MCF 10A (cell line): ENCODE measurements at regions of chr3 and their contacts with region 1.

Region 1: GRCh38 chr3:8769088-8769822 is at the start of gene OXTR:
- DNase-seq: peak; percentile 57
- H3K4me3 Mint-ChIP-seq: peak within 1 kb of the TSS; percentile 73
- H3K27ac Mint-ChIP-seq: no peak within 1 kb of the TSS
- H3K4me1 Mint-ChIP-seq: peaks cover 7% of the 10 kb centered on the region
- H3K27me3 Mint-ChIP-seq: peaks cover 14% of the 10 kb centered on the region
- CTCF ChIP-seq: peak; percentile 99
- total RNA-seq, gene OXTR: 0.63 and 1.2 TPM in 2 replicates

Region 2: GRCh38 chr3:8610951-8611350 is 158.3 kb before region 1 on chr3:
- CTCF ChIA-PET with region 1: no interaction called
- POLR2A ChIA-PET with region 1: no interaction called
- intact Hi-C with region 1: no loop called
- DNase-seq: no peak
- H3K4me3 Mint-ChIP-seq: no peak overlapping the region
- H3K27ac Mint-ChIP-seq: no peak overlapping the region
- H3K4me1 Mint-ChIP-seq: peaks cover 11% of the 10 kb centered on the region
- H3K27me3 Mint-ChIP-seq: no peaks in the 10 kb centered on the region
- CTCF ChIP-seq: no peak

Region 3: DNA sequence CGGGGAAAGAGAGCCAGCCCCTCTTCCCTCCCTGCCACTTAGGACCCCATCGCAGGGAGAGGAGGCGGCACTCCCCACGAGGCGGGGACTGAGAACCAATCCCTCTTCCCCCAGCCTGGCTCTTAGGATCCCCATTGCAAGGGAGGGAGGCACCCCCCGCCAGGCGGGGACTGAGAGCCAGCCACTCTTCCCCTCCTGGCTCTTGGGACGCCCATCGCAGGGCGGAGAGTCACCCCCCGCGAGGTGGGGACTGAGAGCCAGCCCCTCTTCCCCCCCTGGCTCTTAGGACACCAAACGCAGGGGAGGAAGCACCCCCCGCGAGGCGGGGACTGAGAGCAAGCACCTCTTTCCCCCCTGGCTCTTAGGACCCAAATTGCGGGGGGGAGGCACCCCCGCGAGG is 90.5 kb before region 1 on chr3:
- CTCF ChIA-PET with region 1: interaction called, 3 read pairs
- POLR2A ChIA-PET with region 1: no interaction called
- intact Hi-C with region 1: loop called (anchors 1 kb)
- DNase-seq: no peak
- H3K4me3 Mint-ChIP-seq: no peak overlapping the region
- H3K27ac Mint-ChIP-seq: no peak overlapping the region
- H3K4me1 Mint-ChIP-seq: peaks cover 11% of the 10 kb centered on the region
- H3K27me3 Mint-ChIP-seq: no peaks in the 10 kb centered on the region
- CTCF ChIP-seq: no peak

Region 4: DNA sequence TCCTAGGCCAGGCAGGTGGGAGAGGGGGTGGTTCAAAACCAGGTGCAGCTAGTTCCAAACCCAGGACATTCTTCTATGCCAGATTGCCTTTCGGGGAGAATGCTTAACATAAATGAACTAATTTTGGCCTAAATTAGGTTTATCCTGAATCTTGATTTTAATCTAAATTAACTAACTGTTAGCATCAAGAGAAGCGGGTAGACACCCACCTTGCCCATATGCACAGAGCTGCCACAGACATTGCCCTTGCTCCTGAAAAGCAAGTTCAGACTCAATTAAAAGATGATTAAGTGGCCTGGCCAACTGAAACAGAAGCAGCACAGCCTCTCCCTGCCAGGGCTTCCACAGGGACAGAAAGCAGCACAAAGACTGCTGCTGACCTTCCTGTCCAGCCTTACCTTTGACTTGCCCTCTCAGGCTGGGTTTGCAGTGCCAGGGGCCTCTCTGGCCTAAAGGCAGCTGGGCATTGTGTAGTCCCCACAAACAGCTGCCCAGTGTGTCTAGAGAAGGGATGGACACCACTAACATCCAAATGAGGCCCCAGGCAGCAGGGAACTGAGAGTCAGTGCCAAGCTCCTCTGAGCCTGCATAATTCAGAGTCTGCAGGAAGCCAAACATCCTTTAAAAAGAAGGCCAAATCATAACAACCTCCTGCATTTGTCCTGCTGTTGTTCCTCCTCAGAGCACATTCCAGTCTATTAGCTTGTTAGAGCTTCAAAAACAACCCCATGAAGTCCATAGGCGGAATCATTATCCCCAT is 15.6 kb after region 1 on chr3:
- CTCF ChIA-PET with region 1: interaction called, 30 read pairs
- POLR2A ChIA-PET with region 1: no interaction called
- intact Hi-C with region 1: no loop called
- DNase-seq: no peak
- H3K4me3 Mint-ChIP-seq: no peak overlapping the region
- H3K27ac Mint-ChIP-seq: no peak overlapping the region
- H3K4me1 Mint-ChIP-seq: no peaks in the 10 kb centered on the region
- H3K27me3 Mint-ChIP-seq: no peaks in the 10 kb centered on the region
- CTCF ChIP-seq: no peak

Region 5: GRCh38 chr3:8938021-8938420 is 168.8 kb after region 1 on chr3:
- CTCF ChIA-PET with region 1: interaction called, 10 read pairs
- POLR2A ChIA-PET with region 1: no interaction called
- intact Hi-C with region 1: loop called (anchors 1 kb)
- DNase-seq: peak; percentile 49
- H3K4me3 Mint-ChIP-seq: no peak overlapping the region
- H3K27ac Mint-ChIP-seq: peak overlapping the region; percentile 84
- H3K4me1 Mint-ChIP-seq: peaks cover 27% of the 10 kb centered on the region
- H3K27me3 Mint-ChIP-seq: no peaks in the 10 kb centered on the region
- CTCF ChIP-seq: peak; percentile 35

Region 6: GRCh38 chr3:9224490-9224889 is 455.2 kb after region 1 on chr3:
- CTCF ChIA-PET with region 1: no interaction called
- POLR2A ChIA-PET with region 1: no interaction called
- intact Hi-C with region 1: no loop called
- DNase-seq: peak; percentile 9
- H3K4me3 Mint-ChIP-seq: no peak overlapping the region
- H3K27ac Mint-ChIP-seq: no peak overlapping the region
- H3K4me1 Mint-ChIP-seq: peaks cover 9% of the 10 kb centered on the region
- H3K27me3 Mint-ChIP-seq: no peaks in the 10 kb centered on the region
- CTCF ChIP-seq: no peak